GM13977 (cell line): ENCODE measurements at regions of chrX and their contacts with region 1.

Region 1: GRCh38 chrX:19343535-19344408 is at the start of gene PDHA1:
- DNase-seq: peak; percentile 87
- CTCF ChIP-seq: no peak

Region 2: DNA sequence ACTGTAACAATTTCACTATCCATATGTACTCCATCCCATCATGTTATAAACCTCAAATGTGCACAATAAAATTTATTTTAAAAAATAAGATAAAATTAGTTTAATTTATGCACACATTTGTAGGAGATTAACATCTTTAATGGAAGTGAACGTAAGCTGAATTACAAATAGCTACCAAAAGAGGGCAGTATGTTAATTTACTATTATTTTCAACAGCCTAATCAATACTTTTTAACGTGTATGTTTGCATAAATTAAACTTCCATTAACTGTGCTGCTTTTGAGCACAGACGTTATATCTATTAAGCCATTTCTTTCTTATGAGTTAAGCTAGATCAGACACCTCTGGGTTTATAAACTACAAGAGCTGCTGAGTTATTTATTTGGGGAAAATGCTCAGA is 303.4 kb before region 1 on chrX:
- in situ Hi-C with region 1: loop called (anchors 25 kb)
- DNase-seq: no peak
- CTCF ChIP-seq: peak; percentile 30

Region 3: DNA sequence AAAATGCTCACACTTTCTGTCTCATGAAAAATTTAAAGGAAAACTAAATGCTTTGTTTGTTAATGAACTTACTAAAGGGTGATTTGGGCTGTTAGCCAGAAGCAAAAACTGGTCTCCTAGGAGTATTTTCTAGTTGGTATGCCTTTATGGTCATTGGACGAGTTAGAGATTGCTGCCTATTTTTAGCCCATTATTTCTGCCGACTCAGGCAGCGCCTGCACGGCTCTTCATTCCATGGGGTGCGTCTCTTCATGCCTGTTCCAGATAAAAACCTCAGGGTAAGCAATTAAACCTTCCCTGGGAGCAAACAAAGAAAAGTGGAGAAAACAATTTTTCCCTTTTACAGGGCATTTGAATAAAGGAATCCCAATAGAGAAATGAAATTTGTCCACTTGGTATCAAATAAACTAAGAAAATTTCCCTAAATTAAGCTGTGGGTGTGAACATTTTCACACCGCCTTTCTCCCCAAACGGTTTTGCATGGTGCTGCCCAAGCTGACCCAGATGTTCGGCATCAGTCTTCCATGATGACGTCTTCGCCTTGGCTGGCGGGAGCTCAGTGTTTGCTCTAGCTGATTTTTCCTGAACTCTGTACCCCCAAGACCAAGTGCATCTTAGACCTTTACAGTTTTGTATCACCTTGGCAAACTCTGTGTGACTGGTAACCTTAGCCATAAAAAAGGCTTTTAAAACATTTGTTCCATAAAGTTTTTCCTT is 159.9 kb before region 1 on chrX:
- in situ Hi-C with region 1: no loop called
- DNase-seq: no peak
- CTCF ChIP-seq: no peak